ENCODE measurements at regions of chr17 and their contacts with region 1.

Region 1: DNA sequence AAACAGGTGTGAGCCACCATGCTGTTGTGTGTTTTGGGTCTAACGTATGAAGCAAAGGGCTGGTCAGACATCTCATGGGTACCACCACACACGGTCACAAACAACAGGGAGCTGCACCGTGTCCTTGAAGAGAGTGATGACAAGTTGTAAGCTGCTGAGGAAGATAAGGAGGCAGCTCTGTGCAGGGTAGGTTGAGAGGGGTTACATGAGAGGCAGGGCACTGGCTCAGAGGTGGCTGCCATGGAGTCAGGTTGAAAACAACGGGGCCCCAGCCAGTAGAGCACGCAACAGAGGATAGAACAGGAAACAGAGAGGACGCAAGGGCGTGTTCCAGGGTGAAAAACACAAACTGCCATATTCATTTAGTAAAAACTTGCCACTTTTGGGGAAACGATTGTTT is 52.2 kb downstream of the TRARG1 start:
- DNase-seq: peak in 7 of 9 donors; percentile 48 to 76 (median 56)
- ATAC-seq: peak; percentile 83
- H3K4me3 ChIP-seq: no peak overlapping the region
- H3K4me3 Mint-ChIP-seq: peak overlapping the region in 9 of 10 donors; percentile 10 to 80 (median 55)
- H3K27ac ChIP-seq: no peak overlapping the region
- H3K27ac Mint-ChIP-seq: peak overlapping the region in 6 of 9 donors; percentile 1 to 85 (median 66)
- H3K4me1 ChIP-seq: peaks cover 0 to 12% of the 10 kb centered on the region in 2 donors
- H3K4me1 Mint-ChIP-seq: peaks cover 4 to 15% (median 12%) of the 10 kb centered on the region in 7 donors
- H3K27me3 ChIP-seq: no peaks in the 10 kb centered on the region
- H3K27me3 Mint-ChIP-seq: no peaks in the 10 kb centered on the region

Region 2: GRCh38 chr17:1260086-1260769 is 71.5 kb before region 1 on chr17:
- CTCF ChIA-PET with region 1: interaction called, 10 read pairs
- POLR2A ChIA-PET with region 1: no interaction called
- intact Hi-C with region 1: loop called (anchors 1 kb)
- DNase-seq: no peak
- ATAC-seq: no peak
- H3K4me3 ChIP-seq: no peak overlapping the region
- H3K4me3 Mint-ChIP-seq: peak overlapping the region in 9 of 10 donors; percentile 11 to 81 (median 56)
- H3K27ac ChIP-seq: no peak overlapping the region
- H3K27ac Mint-ChIP-seq: no peak overlapping the region
- H3K4me1 ChIP-seq: peaks cover 11 to 14% of the 10 kb centered on the region in 2 donors
- H3K4me1 Mint-ChIP-seq: peaks cover 4 to 32% (median 22%) of the 10 kb centered on the region in 7 donors
- H3K27me3 ChIP-seq: peaks cover 3 to 10% of the 10 kb centered on the region in 2 donors
- H3K27me3 Mint-ChIP-seq: peaks cover 26 to 59% (median 29%) of the 10 kb centered on the region in 5 donors

Region 3: DNA sequence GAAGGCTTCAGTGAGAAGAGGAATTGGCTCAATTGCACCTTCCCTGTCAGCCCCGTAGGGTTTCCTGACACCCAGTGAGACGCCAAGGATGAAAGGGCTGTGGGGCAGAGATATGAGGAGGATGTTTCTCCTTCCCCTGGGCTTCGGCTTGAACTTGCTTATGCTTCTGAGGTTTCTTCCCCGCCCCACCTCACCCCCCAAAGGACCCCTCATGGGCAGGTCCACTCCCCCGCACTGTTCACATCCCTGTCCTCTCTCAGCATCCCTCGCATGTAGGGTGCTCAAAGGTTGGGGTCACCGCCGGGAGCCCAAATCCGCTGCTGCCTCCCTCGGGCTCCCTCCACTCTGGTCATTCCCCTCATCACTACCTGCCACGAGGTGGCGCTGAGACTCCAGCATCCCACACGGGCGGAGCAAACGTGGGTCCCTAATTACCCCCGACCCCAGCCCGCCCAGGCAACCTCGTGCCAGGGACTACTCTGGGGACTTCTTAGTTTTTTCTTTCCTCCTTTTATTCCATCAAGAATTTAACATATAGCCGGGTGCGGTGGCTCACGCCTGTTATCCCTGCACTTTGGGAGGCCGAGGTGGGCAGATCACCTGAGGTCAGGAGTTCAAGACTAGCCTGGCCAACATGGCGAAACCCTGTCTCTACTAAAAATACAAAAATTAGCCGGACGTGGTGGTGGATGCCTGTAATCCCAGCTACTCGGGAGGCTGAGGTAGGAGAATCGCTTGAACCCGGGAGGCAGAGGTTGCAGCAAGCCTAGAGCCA is 55.6 kb before region 1 on chr17:
- CTCF ChIA-PET with region 1: interaction called, 14 read pairs
- POLR2A ChIA-PET with region 1: no interaction called
- intact Hi-C with region 1: loop called (anchors 1 kb)
- DNase-seq: peak; percentile 45 to 79 (median 68)
- ATAC-seq: peak; percentile 89
- H3K4me3 ChIP-seq: no peak overlapping the region
- H3K4me3 Mint-ChIP-seq: peak overlapping the region in 7 of 10 donors; percentile 30 to 72 (median 52)
- H3K27ac ChIP-seq: no peak overlapping the region
- H3K27ac Mint-ChIP-seq: peak overlapping the region in 4 of 9 donors; percentile 10 to 77 (median 48)
- H3K4me1 ChIP-seq: peaks cover 4 to 5% of the 10 kb centered on the region in 2 donors
- H3K4me1 Mint-ChIP-seq: peaks cover 0 to 12% (median 8%) of the 10 kb centered on the region in 7 donors
- H3K27me3 ChIP-seq: peaks cover 0 to 5% of the 10 kb centered on the region in 2 donors
- H3K27me3 Mint-ChIP-seq: peaks cover 25 to 39% (median 35%) of the 10 kb centered on the region in 5 donors